ENCODE measurements at regions of chr2 and their contacts with region 1.

Region 1: GRCh38 chr2:207502577-207503198 is 27.1 kb upstream of the CREB1 start:
- H3K4me3 Mint-ChIP-seq: no peak overlapping the region
- H3K27ac Mint-ChIP-seq: peak overlapping the region; percentile 90
- H3K4me1 Mint-ChIP-seq: peaks cover 90% of the 10 kb centered on the region
- H3K27me3 Mint-ChIP-seq: no peaks in the 10 kb centered on the region

Region 2: GRCh38 chr2:207394812-207395534 is 107.7 kb before region 1 on chr2:
- intact Hi-C with region 1: no loop called
- H3K4me3 Mint-ChIP-seq: no peak overlapping the region
- H3K27ac Mint-ChIP-seq: no peak overlapping the region
- H3K4me1 Mint-ChIP-seq: peaks cover 6% of the 10 kb centered on the region
- H3K27me3 Mint-ChIP-seq: peaks cover 2% of the 10 kb centered on the region

Region 3: DNA sequence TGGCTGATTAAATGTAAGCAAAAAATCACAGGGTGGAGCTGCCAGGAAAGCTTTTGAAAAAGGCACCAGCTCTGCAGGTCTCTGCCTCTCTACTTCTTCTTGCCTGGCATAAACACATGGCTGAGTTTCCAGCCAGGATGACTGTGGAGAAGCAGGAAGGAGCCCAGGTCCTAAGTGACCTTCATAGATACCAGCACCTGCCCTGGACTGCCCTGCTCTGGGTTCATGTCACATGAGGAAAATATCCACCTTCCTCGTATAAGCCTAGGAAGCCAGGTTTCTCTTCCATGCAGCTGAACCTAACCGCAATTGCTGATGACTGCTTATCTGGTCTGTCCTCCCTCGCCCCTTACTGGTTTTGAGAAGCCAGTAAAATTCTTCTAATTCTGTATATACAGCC is 20.8 kb before region 1 on chr2:
- intact Hi-C with region 1: loop called (anchors 2 kb)
- H3K4me3 Mint-ChIP-seq: no peak overlapping the region
- H3K27ac Mint-ChIP-seq: peak overlapping the region; percentile 48
- H3K4me1 Mint-ChIP-seq: peaks cover 39% of the 10 kb centered on the region
- H3K27me3 Mint-ChIP-seq: no peaks in the 10 kb centered on the region

Region 4: DNA sequence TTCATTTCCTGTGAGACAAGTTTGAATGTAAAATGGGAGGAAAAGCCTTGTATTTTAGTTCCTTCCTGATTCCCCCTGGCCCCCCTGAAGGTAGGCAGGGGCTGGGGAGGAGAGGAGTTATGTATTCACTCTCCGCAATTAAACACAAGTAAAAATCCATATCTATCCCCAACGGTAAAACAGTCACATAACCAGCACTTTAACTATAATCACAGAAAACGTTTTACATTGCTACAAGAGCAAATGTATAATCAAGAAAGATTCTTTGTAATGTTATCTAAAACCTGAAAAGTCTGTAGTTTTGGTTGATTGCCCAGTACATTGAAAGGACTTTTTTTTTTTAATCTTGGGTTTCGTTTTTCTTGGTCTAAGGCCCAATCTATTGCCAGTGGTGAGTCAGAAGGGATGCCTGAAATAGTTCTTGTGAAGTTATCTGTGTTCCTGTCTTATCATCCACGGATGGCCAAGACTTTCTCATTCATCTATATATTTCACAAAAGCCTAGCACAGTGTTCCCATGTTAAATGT is 174.2 kb after region 1 on chr2:
- intact Hi-C with region 1: no loop called
- H3K4me3 Mint-ChIP-seq: no peak overlapping the region
- H3K27ac Mint-ChIP-seq: no peak overlapping the region
- H3K4me1 Mint-ChIP-seq: no peaks in the 10 kb centered on the region
- H3K27me3 Mint-ChIP-seq: peaks cover 7% of the 10 kb centered on the region

Region 5: DNA sequence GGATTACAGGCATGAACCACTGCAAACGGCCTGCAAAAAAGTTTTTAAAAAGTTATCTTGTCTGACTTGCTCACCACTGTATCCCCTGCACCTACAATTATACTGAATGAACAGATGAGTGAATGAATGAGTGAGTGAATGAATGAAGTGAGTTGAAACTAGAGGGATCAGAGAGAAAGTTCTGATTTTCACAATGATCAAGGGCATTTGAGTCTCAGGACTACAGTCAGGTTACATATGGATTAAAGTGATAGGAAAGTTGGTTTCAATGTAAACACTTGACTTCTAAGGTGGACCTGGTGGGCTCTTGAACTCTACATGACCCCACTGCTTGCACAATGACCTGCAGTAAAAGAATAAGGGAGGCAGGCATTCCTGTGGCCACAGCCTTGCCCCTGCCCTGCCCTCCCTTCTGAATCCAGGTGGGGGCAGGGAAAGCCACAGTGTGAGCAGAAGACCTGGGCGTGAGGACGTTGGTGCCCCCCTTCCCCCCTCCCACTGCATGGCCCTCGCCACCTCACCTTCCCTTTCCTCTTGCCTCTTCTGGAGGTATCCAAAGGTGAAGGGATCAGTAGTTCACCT is 676.4 kb after region 1 on chr2:
- intact Hi-C with region 1: no loop called
- H3K4me3 Mint-ChIP-seq: no peak overlapping the region
- H3K27ac Mint-ChIP-seq: no peak overlapping the region
- H3K4me1 Mint-ChIP-seq: peaks cover 35% of the 10 kb centered on the region
- H3K27me3 Mint-ChIP-seq: no peaks in the 10 kb centered on the region

Measured in dendritic cell treated with granulocyte-macrophage colony-stimulating factor and Interleukin-4, amounts not matched to agents 40 ng/mL and 50 ng/mL, for 4 days (primary cell).